Activated T-helper 1 cell treated with anti-CD3 and anti-CD28 coated beads, Interleukin-12 subunit alpha, Interleukin-12 subunit beta, Interleukin-2, Interleukin-4 antibody, amounts not matched to agents 30 ng/mL and 10 ng/mL and 1 ng/mL, durations not matched to agents 14 hours and 24 hours and 36 hours (primary cell): ENCODE measurements at regions of chr11 and their contacts with region 1.

Region 1: GRCh38 chr11:13462901-13463778 is at the start of gene BTBD10:
- DNase-seq: peak; percentile 92
- H3K4me3 Mint-ChIP-seq: peak within 1 kb of the TSS; percentile 99
- H3K27ac Mint-ChIP-seq: peak within 1 kb of the TSS; percentile 98
- H3K4me1 Mint-ChIP-seq: peaks cover 38% of the 10 kb centered on the region
- H3K27me3 Mint-ChIP-seq: peaks cover 3% of the 10 kb centered on the region
- total RNA-seq, gene BTBD10: 21.2 and 21.9 TPM in 2 replicates

Region 2: DNA sequence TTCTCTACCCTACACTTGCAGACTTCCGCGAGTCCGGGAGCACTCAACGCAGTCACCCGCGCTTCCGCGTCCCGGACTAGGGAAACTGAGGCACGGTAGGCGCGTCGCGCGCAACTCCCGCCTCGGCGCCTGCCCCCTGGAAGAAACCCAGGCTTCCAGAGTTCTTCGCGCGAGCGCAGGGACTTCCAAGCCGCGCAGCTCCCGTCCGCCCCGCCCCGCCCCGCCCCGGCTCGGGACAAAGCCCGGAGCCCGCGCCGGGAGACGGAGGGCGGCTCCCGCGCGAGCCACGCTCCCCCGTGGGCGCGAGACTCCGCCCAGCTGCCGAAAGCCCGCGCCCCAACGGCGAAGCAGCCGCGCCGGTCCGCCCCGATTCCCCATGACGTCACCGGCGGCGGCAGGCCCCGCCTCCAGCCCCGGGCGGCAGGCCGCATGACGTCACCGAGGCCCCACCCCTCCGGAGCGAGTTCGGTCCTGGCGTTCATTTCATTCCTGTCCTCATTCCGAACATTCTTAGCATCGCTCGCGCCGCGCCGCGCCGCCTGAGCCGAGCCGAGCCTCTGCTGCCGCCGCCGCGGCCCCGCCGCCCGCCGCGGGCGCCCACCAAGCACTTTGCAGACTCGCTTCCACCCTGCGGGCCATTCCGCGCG is 789.1 kb before region 1 on chr11 and contains the start of gene TEAD1:
- intact Hi-C with region 1: loop called (anchors 10 kb)
- DNase-seq: peak; percentile 86
- H3K4me3 Mint-ChIP-seq: peak within 1 kb of the TSS; percentile 82
- H3K27ac Mint-ChIP-seq: peak within 1 kb of the TSS; percentile 47
- H3K4me1 Mint-ChIP-seq: peaks cover 6% of the 10 kb centered on the region
- H3K27me3 Mint-ChIP-seq: peaks cover 52% of the 10 kb centered on the region
- total RNA-seq, gene TEAD1: 0.41 and 1.2 TPM in 2 replicates

Region 3: GRCh38 chr11:13183094-13183825 is 279.9 kb before region 1 on chr11:
- intact Hi-C with region 1: loop called (anchors 1 kb)
- DNase-seq: no peak
- H3K4me3 Mint-ChIP-seq: no peak overlapping the region
- H3K27ac Mint-ChIP-seq: no peak overlapping the region
- H3K4me1 Mint-ChIP-seq: peaks cover 9% of the 10 kb centered on the region
- H3K27me3 Mint-ChIP-seq: peaks cover 9% of the 10 kb centered on the region

Region 4: DNA sequence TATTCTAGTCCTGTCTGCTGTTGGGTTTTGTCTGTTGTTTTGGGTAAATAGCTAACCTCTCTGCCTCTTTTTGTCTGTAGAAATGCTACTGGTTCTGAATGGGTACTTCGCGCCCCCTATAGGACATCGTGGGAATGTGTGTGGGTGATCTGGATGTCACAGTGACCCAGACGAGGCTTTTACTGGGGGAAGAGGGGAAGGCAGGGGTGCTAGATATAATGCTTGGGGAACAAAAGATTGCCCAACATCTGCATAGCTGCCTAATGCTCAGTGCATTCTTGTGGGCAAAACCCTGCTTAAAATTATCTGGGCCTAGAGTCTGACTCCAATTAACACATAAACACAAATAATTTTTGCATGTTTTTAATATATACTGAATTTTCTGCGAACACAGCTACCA is 127.8 kb before region 1 on chr11:
- intact Hi-C with region 1: loop called (anchors 5 kb)
- DNase-seq: peak; percentile 58
- H3K4me3 Mint-ChIP-seq: no peak overlapping the region
- H3K27ac Mint-ChIP-seq: peak overlapping the region; percentile 25
- H3K4me1 Mint-ChIP-seq: peaks cover 56% of the 10 kb centered on the region
- H3K27me3 Mint-ChIP-seq: no peaks in the 10 kb centered on the region

Region 5: GRCh38 chr11:14269692-14270573 is 806.8 kb after region 1 on chr11:
- intact Hi-C with region 1: loop called (anchors 10 kb)
- DNase-seq: no peak
- H3K4me3 Mint-ChIP-seq: no peak overlapping the region
- H3K27ac Mint-ChIP-seq: no peak overlapping the region
- H3K4me1 Mint-ChIP-seq: peaks cover 25% of the 10 kb centered on the region
- H3K27me3 Mint-ChIP-seq: no peaks in the 10 kb centered on the region

Region 6: GRCh38 chr11:14907411-14908213 is 1444.5 kb after region 1 on chr11:
- intact Hi-C with region 1: loop called (anchors 10 kb)
- DNase-seq: peak; percentile 76
- H3K4me3 Mint-ChIP-seq: peak overlapping the region; percentile 23
- H3K27ac Mint-ChIP-seq: no peak overlapping the region
- H3K4me1 Mint-ChIP-seq: peaks cover 63% of the 10 kb centered on the region
- H3K27me3 Mint-ChIP-seq: no peaks in the 10 kb centered on the region